Left colon (tissue), 2 donors: ENCODE measurements at regions of chr4 and their contacts with region 1.

Region 1: GRCh38 chr4:51842554-51843308 is at the start of gene DCUN1D4:
- DNase-seq: peak; percentile 100
- ATAC-seq: peak; percentile 89
- total RNA-seq, gene DCUN1D4: 29.7 to 37.5 TPM

Region 2: DNA sequence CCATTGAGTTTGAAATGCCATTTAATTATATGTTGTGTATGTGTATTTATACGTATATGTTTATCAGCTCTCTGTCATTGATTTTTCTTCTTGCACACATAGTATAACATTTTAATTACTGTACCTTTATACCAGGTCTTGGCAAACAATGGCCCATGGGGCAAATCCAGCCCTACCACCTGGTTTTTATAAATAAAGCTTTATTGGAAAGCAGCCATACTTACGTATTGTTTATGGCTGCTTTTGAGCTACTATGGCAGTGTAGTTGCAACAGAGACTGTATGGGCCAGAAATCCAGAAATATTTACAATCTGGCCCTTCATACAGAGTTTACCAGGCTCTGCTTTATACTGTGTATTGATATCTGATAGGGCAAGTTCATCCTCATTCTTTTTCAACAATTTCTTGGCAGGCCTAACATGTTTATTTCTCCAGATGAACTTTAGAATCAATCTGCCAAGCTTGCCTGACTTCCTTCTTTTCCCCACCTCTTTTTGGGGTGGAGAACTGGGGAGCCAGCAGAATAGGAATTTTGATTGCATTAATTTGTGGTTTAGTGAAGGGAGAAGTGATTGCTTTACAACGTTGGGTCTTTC is 16.0 kb after region 1 on chr4:
- intact Hi-C with region 1: no loop called
- DNase-seq: no peak
- ATAC-seq: peak; percentile 89

Region 3: GRCh38 chr4:51906167-51906958 is 63.6 kb after region 1 on chr4:
- intact Hi-C with region 1: loop called in 1 of 2 experiments (anchors 10 kb)
- DNase-seq: no peak
- ATAC-seq: peak; percentile 59

Region 4: DNA sequence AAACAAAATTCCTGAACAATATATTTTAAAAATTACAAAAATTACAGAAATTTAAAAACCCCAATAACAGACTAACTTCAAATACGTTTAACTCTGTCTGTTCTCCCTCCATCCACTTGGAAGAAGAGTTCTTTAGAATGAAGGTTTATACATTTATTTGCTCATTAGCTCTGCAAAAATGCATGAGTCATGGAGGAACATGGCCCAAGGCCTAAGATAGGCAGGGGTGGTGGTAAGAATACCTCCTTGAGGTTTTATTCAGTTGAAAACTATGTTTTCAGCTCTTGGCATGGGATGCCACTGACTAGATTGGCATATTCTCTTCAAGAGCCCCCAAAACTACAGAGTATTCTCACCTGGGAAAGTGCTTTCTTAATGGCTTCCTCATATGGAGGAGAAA is 186.2 kb after region 1 on chr4:
- intact Hi-C with region 1: loop called in 1 of 2 experiments (anchors 10 kb)
- DNase-seq: no peak
- ATAC-seq: no peak